Dorsolateral prefrontal cortex (tissue), 120 donors: ENCODE measurements at regions of chr15 and their contacts with region 1.

Region 1: GRCh38 chr15:40754883-40755811 is at the start of gene RMDN3:
- DNase-seq: peak; percentile 84 to 96 (median 90)
- H3K4me3 ChIP-seq: peak within 1 kb of the TSS; percentile 62 to 99 (median 92)
- H3K27ac ChIP-seq: peak within 1 kb of the TSS in 57 of 59 donors; percentile 19 to 94 (median 79)
- H3K27me3 ChIP-seq: no peaks in the 10 kb centered on the region
- CTCF ChIP-seq: peak in 53 of 56 donors; percentile 14 to 70 (median 47)
- total RNA-seq, gene RMDN3: 51.4 to 80.5 (median 65.4) TPM

Region 2: DNA sequence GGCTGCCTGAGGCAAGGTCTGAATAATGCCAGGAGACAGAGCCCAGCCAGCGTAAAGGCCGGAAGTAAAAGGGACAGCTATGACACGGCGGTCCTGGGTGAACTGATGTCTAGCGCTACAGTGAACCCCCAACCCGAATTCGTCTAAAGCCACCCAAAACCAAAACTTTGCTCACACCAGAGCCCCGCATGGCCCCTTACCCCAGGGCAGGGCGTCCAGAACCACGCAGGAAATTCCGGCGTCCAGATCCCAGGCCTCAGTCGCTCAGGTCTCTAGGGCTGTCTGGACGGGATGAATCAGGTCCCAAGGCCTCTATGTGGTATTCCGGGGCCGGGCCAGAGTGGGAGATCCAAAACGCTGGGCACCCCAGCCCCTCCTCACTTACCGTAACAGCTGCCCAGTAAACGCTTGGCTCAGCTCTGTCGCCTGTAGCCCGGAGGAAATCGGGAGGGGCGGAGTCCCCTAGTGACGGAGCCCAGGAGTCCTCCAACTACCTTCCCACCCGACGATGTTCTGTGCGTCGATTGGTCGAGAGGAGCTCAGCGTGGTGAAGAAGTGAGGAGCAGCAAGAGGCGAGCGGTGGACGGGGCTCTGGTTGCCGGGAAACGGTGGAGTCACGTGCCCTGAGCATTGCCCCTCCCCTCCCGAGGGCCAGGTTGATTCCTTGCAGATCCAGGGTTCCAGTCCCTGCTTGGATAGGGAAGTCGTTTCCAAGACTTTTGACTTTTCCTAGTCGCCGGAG is 190.4 kb before region 1 on chr15 and contains the start of gene CCDC32:
- intact Hi-C with region 1: loop called in 1 of 2 experiments (anchors 10 kb)
- DNase-seq: peak; percentile 98 to 100 (median 100)
- H3K4me3 ChIP-seq: peak within 1 kb of the TSS; percentile 61 to 99 (median 86)
- H3K27ac ChIP-seq: peak within 1 kb of the TSS in 57 of 59 donors; percentile 32 to 94 (median 85)
- H3K27me3 ChIP-seq: no peaks in the 10 kb centered on the region
- CTCF ChIP-seq: peak in 24 of 56 donors; percentile 8 to 64 (median 26)
- total RNA-seq, gene CCDC32: 15.7 to 49.5 (median 30.0) TPM

Region 3: GRCh38 chr15:40593588-40594428 is 161.3 kb before region 1 on chr15 and contains the start of gene KNL1:
- intact Hi-C with region 1: loop called in 1 of 2 experiments (anchors 10 kb)
- DNase-seq: peak; percentile 88 to 97 (median 92)
- H3K4me3 ChIP-seq: peak within 1 kb of the TSS; percentile 50 to 89 (median 72)
- H3K27ac ChIP-seq: peak within 1 kb of the TSS; percentile 70 to 99 (median 95)
- H3K27me3 ChIP-seq: peaks cover 0 to 15% (median 0%) of the 10 kb centered on the region in 45 donors
- CTCF ChIP-seq: peak in 24 of 56 donors; percentile 4 to 56 (median 24)
- total RNA-seq, gene KNL1: 0.04 to 2.4 (median 0.44) TPM in 108 of 120 experiments, not detected in the others

Region 4: DNA sequence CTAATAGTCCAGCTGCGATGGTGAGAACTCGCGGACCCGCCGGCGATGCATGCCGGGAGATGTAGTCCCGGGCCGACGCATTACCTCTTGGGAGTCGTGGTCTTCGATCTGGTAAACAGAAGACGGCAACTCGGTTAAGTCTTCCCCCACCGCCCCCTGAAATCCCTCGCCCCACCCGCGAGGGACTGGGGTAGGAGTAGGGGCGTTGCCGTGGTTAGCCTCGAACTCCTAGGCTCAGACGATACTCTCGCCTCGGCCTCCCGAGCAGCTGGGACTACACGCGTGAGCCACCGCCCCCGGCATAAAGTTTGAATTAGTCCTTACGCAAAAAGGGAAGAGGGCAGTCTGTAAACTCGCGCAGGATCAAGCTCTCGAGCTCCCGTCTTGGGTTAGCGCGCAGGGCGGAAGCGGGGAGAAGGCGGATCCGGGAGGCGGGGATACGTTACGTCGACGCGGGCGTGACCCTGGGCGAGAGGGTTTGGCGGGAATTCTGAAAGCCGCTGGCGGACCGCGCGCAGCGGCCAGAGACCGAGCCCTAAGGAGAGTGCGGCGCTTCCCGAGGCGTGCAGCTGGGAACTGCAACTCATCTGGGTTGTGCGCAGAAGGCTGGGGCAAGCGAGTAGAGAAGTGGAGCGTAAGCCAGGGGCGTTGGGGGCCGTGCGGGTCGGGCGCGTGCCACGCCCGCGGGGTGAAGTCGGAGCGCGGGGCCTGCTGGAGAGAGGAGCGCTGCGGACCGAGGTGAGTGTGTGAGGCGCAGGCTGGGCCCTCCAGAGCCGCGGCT is 60.3 kb before region 1 on chr15 and contains the start of gene RAD51:
- intact Hi-C with region 1: no loop called
- DNase-seq: peak; percentile 77 to 94 (median 92)
- H3K4me3 ChIP-seq: peak within 1 kb of the TSS; percentile 63 to 99 (median 91)
- H3K27ac ChIP-seq: peak within 1 kb of the TSS; percentile 90 to 100 (median 99)
- H3K27me3 ChIP-seq: no peaks in the 10 kb centered on the region
- CTCF ChIP-seq: peak in 11 of 56 donors; percentile 8 to 31 (median 14)
- total RNA-seq, gene RAD51: 0.23 to 3.8 (median 0.87) TPM in 85 of 120 experiments, not detected in the others

Region 5: DNA sequence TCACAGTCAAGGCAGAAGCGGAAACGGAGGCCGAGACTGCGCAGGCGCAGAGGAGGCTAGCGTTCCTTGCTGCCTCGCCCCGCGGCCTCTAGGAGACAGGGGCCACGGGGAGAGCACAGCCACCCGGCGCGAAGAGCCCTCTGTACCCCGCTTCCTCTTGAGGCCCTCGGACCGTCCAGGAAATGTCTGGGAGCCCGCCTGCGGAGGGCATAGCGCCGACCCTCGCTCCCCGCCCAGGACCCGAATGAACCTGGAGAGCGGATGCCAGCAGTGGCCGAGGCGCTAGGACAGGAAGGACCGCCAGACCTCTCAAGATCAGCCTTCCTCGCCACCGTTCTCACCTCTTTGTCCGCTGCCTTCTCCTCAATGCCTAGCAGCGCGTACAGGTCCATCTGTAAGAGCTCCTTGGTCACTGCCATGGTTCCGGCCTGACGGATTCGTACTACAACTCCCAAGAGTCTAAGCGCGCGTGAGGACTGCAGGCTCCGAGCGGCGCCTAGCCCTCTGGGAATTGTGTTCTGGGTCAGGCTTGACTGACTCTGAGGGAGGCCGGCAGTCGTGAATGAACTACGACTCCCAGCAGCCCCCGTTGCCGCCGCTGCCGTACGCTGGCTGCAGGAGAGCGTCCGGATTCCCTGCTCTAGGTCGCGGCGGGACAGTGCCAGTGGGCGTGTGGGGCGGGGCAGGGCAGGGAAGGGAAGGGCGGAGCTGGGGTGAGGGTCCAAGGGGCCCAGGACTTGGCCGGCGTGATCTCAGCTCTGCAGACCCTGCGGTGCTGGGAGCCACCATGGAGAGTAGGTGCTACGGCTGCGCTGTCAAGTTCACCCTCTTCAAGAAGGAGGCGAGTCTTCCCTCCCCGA is 52.1 kb after region 1 on chr15 and contains the starts of genes DNAJC17 and ZFYVE19:
- intact Hi-C with region 1: loop called in 1 of 2 experiments (anchors 2 kb)
- DNase-seq: peak; percentile 94 to 99 (median 98)
- H3K4me3 ChIP-seq: peak within 1 kb of the TSS; percentile 70 to 100 (median 95)
- H3K27ac ChIP-seq: peak within 1 kb of the TSS; percentile 75 to 99 (median 95)
- H3K27me3 ChIP-seq: no peaks in the 10 kb centered on the region
- CTCF ChIP-seq: peak in 24 of 56 donors; percentile 3 to 58 (median 20)
- total RNA-seq, gene DNAJC17: 17.9 to 54.4 (median 34.3) TPM
- total RNA-seq, gene ZFYVE19: 17.6 to 48.7 (median 30.8) TPM

Region 6: GRCh38 chr15:41116116-41116871 is 361.1 kb after region 1 on chr15 and contains the start of gene INO80:
- intact Hi-C with region 1: loop called in 1 of 2 experiments (anchors 10 kb)
- DNase-seq: peak; percentile 87 to 99 (median 96)
- H3K4me3 ChIP-seq: peak within 1 kb of the TSS; percentile 68 to 99 (median 92)
- H3K27ac ChIP-seq: peak within 1 kb of the TSS; percentile 89 to 100 (median 99)
- H3K27me3 ChIP-seq: no peaks in the 10 kb centered on the region
- CTCF ChIP-seq: peak in 27 of 56 donors; percentile 7 to 45 (median 26)
- total RNA-seq, gene INO80: 15.8 to 35.4 (median 24.2) TPM

Region 7: GRCh38 chr15:41283653-41284426 is 528.7 kb after region 1 on chr15:
- intact Hi-C with region 1: loop called in 1 of 2 experiments (anchors 10 kb)
- DNase-seq: peak; percentile 95 to 98 (median 97)
- H3K4me3 ChIP-seq: peak overlapping the region; percentile 66 to 100 (median 95)
- H3K27ac ChIP-seq: peak overlapping the region; percentile 26 to 97 (median 88)
- H3K27me3 ChIP-seq: no peaks in the 10 kb centered on the region
- CTCF ChIP-seq: peak in 12 of 56 donors; percentile 7 to 41 (median 22)